Activated CD4-positive, alpha-beta memory T cell treated with anti-CD3 and anti-CD28 coated beads for 36 hours (primary cell): ENCODE measurements at regions of chr19 and their contacts with region 1.

Region 1: DNA sequence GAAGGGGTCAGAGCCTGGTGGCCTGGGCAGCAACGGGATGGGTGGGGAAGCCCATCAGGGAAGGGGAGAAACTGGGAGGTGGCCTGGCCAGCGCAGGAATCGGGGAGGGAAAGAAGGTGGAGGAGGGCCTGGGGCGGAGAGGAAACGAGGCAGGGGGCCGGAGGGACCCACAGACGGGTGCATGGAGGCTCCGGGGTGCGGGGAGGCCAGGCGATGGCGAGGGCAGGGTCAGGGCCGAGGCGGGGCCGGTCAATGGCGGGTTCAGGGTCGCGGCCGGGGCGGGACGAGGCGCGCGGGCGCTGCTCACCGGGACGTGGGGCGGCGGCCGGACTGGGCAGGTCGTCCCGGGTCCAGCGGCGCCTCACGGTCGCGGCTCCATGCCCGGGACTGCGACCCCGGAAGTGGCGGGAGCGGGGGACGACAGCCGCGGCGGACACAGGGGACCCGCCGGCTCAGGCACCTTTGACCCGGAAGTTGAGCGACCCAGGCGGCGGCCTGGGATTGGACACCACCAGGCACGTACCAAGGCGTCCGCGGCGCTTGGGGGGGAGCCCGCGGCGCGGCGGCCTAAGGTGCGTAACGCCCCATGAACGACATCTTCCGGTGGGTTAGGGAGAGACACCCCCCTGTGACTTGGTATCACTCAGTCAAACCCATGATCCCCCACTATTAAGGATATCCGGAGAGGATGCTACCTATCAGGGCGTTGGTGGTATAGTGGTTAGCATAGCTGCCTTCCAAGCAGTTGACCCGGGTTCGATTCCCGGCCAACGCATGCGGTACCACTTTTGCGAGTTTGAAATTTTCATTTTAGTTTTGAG is at the start of gene DPP9:
- DNase-seq: peak; percentile 98
- H3K4me3 Mint-ChIP-seq: peak within 1 kb of the TSS; percentile 84
- H3K27ac Mint-ChIP-seq: peak within 1 kb of the TSS; percentile 95
- H3K4me1 Mint-ChIP-seq: peaks cover 28% of the 10 kb centered on the region
- H3K27me3 Mint-ChIP-seq: peaks cover 5% of the 10 kb centered on the region
- total RNA-seq, gene DPP9: 54.8 to 57.5 TPM

Region 2: GRCh38 chr19:4583961-4584669 is 139.5 kb before region 1 on chr19:
- CTCF ChIA-PET with region 1: no interaction called
- POLR2A ChIA-PET with region 1: no interaction called
- intact Hi-C with region 1: no loop called
- DNase-seq: peak; percentile 34
- H3K4me3 Mint-ChIP-seq: no peak overlapping the region
- H3K27ac Mint-ChIP-seq: no peak overlapping the region
- H3K4me1 Mint-ChIP-seq: peaks cover 8% of the 10 kb centered on the region
- H3K27me3 Mint-ChIP-seq: peaks cover 42% of the 10 kb centered on the region

Region 3: DNA sequence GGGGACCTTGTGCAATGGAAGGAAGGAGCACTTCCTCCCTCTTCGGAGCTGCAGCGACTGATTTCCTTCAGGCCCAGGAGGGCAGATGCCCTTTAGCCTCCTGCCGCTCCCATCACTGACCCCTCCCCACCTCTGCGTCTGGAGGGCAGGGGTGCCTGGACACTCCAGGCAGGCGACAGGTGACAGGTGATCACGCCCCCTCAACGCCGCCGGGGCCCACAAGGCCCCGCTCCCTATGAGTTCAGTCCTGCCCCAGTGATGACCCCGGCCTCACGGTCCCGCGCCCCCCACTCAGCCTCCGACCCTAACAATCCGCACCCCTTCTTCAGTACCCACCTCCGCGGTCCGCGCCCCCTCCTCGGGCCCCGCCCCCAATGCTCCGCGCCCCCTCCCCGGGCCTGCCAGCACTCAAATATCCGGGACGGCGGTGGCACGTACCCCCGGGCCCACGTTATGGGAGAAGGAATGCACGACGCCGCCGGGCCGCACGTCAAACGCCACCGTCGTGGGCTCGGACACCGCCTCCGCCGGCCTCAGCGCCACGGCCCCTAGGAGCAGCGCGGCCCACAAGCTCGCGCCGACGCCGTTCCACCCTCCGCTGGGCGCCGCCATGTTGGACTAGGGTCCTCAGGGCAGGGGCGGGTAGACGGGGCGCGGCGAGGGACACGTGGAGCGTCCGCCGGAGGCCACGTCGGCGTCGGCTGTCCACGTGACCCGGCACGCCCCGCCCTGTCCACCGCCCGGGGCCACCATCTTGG is 53.7 kb before region 1 on chr19 and contains the start of gene MYDGF:
- CTCF ChIA-PET with region 1: no interaction called
- POLR2A ChIA-PET with region 1: no interaction called
- intact Hi-C with region 1: loop called (anchors 1 kb)
- DNase-seq: peak; percentile 95
- H3K4me3 Mint-ChIP-seq: peak within 1 kb of the TSS; percentile 87
- H3K27ac Mint-ChIP-seq: peak within 1 kb of the TSS; percentile 75
- H3K4me1 Mint-ChIP-seq: peaks cover 18% of the 10 kb centered on the region
- H3K27me3 Mint-ChIP-seq: no peaks in the 10 kb centered on the region
- total RNA-seq, gene MYDGF: 72.9 to 74.7 TPM

Region 4: DNA sequence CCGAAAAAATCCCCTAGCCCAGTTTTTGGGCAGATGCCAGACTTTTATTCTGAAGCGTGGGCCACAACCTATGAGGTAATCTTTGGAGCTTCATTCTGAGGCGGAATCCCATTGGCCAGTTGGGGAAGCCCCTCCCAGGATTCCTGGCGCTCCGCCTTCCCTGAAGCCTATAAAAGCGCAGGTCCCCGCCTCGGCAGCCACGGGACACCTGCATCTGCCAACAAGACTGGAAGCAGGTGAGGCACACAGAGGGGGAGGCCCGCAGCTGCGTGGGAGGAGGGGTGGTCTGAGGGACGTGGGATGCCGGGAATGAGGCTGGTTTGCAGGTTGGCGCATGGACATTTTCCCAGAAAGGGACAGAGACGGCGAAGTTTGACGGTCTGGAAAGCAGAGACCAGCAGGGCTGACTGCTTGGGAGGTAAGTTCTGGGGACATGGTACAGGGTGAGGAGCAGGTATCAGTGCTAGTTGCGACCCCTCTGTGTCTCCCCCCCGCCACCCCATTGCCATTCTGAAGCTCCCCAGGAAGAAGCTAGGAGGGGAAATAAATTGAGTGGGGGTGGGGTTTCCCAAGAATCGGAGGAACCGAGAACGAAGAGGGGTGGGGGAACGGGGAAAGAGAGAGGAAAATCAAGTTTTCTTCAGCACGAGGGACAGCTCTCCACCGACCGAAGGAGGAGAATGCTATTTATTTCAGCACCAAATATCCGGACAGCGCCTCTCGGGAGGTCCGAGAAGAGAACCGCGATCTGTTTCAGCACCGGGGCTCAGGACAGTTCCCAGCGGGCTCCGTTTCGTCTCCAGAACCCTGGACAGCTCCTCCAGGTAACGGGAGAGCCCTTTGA is 45.6 kb after region 1 on chr19:
- CTCF ChIA-PET with region 1: no interaction called
- POLR2A ChIA-PET with region 1: no interaction called
- intact Hi-C with region 1: no loop called
- DNase-seq: peak; percentile 87
- H3K4me3 Mint-ChIP-seq: no peak overlapping the region
- H3K27ac Mint-ChIP-seq: no peak overlapping the region
- H3K4me1 Mint-ChIP-seq: no peaks in the 10 kb centered on the region
- H3K27me3 Mint-ChIP-seq: peaks cover 12% of the 10 kb centered on the region

Region 5: GRCh38 chr19:4968462-4969291 is 245.1 kb after region 1 on chr19 and contains the start of gene KDM4B:
- CTCF ChIA-PET with region 1: no interaction called
- POLR2A ChIA-PET with region 1: no interaction called
- intact Hi-C with region 1: loop called (anchors 2 kb)
- DNase-seq: peak; percentile 99
- H3K4me3 Mint-ChIP-seq: peak within 1 kb of the TSS; percentile 89
- H3K27ac Mint-ChIP-seq: peak within 1 kb of the TSS; percentile 79
- H3K4me1 Mint-ChIP-seq: peaks cover 31% of the 10 kb centered on the region
- H3K27me3 Mint-ChIP-seq: no peaks in the 10 kb centered on the region
- total RNA-seq, gene KDM4B: 19.2 to 20.6 TPM